Activated CD4-positive, alpha-beta T cell treated with anti-CD3 and anti-CD28 coated beads for 36 hours (primary cell): ENCODE measurements at regions of chr11 and their contacts with region 1.

Region 1: GRCh38 chr11:47766305-47767227 is 575 bp downstream of the FNBP4 start:
- DNase-seq: peak; percentile 89
- ATAC-seq: peak; percentile 37
- H3K4me3 Mint-ChIP-seq: peak overlapping the region; percentile 98
- H3K27ac Mint-ChIP-seq: peak overlapping the region; percentile 98
- H3K4me1 Mint-ChIP-seq: peaks cover 18% of the 10 kb centered on the region
- H3K27me3 Mint-ChIP-seq: no peaks in the 10 kb centered on the region

Region 2: DNA sequence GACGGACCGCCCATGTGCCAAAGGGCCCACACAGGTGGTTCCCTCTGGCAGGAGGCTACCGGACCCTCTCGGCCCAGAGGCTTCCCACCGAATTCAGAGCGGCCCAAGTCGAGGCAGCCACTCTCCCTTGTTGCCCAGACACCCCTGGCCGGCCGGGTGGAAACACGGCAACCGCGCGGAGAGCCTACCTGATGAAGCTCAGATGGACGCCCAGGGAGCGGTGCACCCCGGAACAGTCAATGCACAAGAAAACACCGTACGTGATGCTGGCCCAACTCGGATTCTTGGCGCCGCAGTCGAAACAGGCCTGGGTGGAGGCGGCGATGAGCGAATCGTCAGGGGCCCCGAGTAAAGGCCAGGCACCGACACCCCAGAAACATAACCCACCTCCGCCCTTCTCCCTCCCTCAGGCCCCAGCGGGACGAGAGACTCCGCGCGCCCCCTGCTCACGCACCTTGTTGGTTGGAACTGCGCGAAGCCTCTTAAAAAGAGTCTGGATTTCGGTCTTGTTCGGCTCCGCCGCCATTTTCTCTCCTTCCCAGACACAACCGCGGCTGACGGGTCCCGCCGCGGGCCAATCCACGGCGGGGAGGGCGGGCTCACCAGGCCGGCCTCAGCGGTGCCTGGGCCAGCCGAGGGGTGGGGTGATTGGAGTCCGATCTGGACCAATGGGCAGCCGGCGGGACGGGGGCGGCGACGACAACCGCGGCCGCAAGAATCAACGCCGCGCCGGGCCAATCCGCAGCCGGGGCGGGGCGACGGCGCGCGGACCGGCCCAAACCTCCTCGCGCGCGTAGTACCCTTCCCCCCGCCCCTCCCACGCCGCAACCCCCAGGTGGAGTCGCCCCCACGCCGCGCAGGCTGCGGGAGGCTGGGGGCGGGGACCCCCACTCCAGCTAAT is 590.0 kb before region 1 on chr11 and contains the start of gene ARFGAP2:
- CTCF ChIA-PET with region 1: no interaction called
- POLR2A ChIA-PET with region 1: no interaction called
- intact Hi-C with region 1: loop called (anchors 1 to 2 kb)
- DNase-seq: peak; percentile 98
- ATAC-seq: peak; percentile 95
- H3K4me3 Mint-ChIP-seq: peak within 1 kb of the TSS; percentile 96
- H3K27ac Mint-ChIP-seq: peak within 1 kb of the TSS; percentile 98
- H3K4me1 Mint-ChIP-seq: peaks cover 34% of the 10 kb centered on the region
- H3K27me3 Mint-ChIP-seq: no peaks in the 10 kb centered on the region
- total RNA-seq, gene ARFGAP2: 74.9 to 76.5 TPM

Region 3: GRCh38 chr11:47426061-47426956 is 340.3 kb before region 1 on chr11 and contains the start of gene PSMC3:
- CTCF ChIA-PET with region 1: no interaction called
- POLR2A ChIA-PET with region 1: interaction called, 4 read pairs
- intact Hi-C with region 1: loop called in 1 of 2 experiments (anchors 1 kb)
- DNase-seq: peak; percentile 100
- ATAC-seq: peak; percentile 98
- H3K4me3 Mint-ChIP-seq: peak within 1 kb of the TSS; percentile 100
- H3K27ac Mint-ChIP-seq: peak within 1 kb of the TSS; percentile 100
- H3K4me1 Mint-ChIP-seq: peaks cover 24% of the 10 kb centered on the region
- H3K27me3 Mint-ChIP-seq: no peaks in the 10 kb centered on the region
- total RNA-seq, gene PSMC3: 147 to 167 TPM

Region 4: GRCh38 chr11:47642099-47642855 is 124.3 kb before region 1 on chr11 and contains the start of gene MTCH2:
- CTCF ChIA-PET with region 1: no interaction called
- POLR2A ChIA-PET with region 1: no interaction called
- intact Hi-C with region 1: loop called (anchors 1 kb)
- DNase-seq: peak; percentile 98
- ATAC-seq: peak; percentile 94
- H3K4me3 Mint-ChIP-seq: peak within 1 kb of the TSS; percentile 99
- H3K27ac Mint-ChIP-seq: peak within 1 kb of the TSS; percentile 96
- H3K4me1 Mint-ChIP-seq: peaks cover 25% of the 10 kb centered on the region
- H3K27me3 Mint-ChIP-seq: no peaks in the 10 kb centered on the region
- total RNA-seq, gene MTCH2: 94.8 to 138 TPM

Region 5: DNA sequence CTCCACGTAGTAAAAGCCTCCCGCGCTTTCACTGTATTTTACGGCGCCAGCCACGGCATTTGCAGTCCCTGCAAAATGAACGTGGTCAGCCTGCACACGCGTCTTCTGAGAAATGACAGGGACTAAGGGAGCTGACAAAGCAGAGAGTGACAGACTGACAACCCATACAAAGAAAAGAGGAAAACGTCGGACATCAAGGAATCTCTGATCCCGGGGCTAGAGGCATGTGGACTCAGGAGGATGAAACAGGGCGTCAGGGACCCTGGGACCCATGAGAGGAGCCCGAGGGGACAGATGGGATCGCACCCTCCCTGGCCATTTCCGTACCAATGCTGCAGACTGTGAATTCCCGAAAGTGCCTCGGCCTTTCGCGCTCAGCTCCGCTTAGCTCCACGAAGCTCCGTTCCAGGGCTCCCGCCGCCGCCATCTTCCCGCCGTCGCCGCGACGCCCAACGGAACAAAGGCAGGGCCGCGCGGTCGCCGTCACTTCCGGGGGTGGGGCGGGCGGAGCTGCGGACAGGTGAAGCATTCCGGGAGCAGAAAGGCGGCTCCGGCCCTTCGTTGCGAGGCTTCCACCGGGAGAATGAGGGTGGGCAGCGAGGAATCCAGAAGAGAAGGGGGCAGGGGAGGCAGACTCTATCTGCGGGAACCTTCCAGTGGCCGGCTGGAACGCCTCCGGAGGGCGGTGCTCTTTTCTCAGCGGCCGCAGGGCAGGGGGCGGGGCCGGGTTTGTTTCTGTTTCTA is 81.5 kb after region 1 on chr11 and contains the start of gene NUP160:
- CTCF ChIA-PET with region 1: interaction called, 3 read pairs
- POLR2A ChIA-PET with region 1: interaction called, 3 read pairs
- intact Hi-C with region 1: loop called (anchors 1 kb)
- DNase-seq: peak; percentile 94
- ATAC-seq: peak; percentile 88
- H3K4me3 Mint-ChIP-seq: peak within 1 kb of the TSS; percentile 90
- H3K27ac Mint-ChIP-seq: peak within 1 kb of the TSS; percentile 99
- H3K4me1 Mint-ChIP-seq: peaks cover 44% of the 10 kb centered on the region
- H3K27me3 Mint-ChIP-seq: no peaks in the 10 kb centered on the region
- total RNA-seq, gene NUP160: 67.1 to 84.5 TPM

Region 6: GRCh38 chr11:47899801-47900200 is 133.2 kb after region 1 on chr11:
- CTCF ChIA-PET with region 1: no interaction called
- POLR2A ChIA-PET with region 1: no interaction called
- intact Hi-C with region 1: no loop called
- DNase-seq: no peak
- ATAC-seq: no peak
- H3K4me3 Mint-ChIP-seq: no peak overlapping the region
- H3K27ac Mint-ChIP-seq: no peak overlapping the region
- H3K4me1 Mint-ChIP-seq: peaks cover 6% of the 10 kb centered on the region
- H3K27me3 Mint-ChIP-seq: no peaks in the 10 kb centered on the region